Posterior cingulate gyrus (tissue), 11 donors: ENCODE measurements at regions of chr10 and their contacts with region 1.

Region 1: GRCh38 chr10:59625721-59626522 is 83.7 kb downstream of the SLC16A9 start:
- DNase-seq: peak in 6 of 10 donors; percentile 11 to 83 (median 44)

Region 2: DNA sequence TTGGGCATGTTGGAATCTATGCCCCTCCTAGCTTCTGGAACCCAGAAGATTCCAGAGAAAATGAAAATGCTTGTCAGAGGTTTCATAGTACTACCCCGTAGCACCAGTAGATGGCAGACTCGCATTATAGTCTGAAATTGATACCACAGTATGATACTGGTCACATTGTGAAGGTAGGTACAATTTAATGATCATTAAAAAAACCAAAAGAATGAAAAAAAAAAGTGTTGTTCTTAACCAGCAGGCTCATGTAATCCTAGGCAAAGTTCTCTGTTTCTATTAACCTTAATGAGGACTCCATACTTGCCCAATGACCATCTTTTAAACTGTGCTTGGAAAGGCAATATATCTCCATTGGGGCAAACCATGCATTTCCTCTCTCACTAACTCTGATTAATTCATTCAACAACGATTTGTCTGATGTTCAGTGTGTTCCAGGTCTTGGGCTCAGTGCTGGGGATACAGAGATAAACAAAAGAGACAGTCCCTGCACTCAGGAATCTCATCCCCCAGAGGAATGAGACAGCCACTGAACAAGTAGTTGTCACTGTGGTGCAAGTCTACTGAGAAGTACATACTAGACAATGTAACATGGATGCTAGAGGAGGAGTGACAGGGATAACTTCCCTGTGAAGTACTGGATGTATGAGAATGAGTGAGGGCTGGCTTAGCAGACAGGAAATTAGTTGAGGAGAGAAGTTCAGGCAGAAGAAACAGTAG is 673.0 kb before region 1 on chr10:
- intact Hi-C with region 1: loop called (anchors 2 kb)
- DNase-seq: peak in 3 of 10 donors; percentile 45 to 61 (median 46)

Region 3: DNA sequence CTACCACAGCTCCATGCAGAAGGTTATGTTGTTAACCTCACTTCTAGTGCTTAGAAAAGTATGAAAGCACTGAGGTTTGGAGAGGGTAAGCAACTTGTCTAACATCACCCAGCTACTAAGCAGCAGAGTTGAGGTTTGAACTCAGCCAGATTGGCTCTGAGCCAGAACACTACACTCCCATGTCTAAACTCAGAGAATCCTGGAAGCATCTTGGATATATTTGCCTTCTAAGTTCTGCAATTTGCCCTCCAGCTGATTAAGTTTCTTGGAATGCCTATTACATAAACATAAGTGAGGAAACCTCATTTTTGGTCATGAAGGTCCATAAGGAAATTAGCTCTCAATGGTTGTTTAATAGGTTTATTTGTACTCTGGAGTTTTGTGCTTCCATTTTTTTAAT is 527.5 kb before region 1 on chr10:
- intact Hi-C with region 1: no loop called
- DNase-seq: no peak

Region 4: GRCh38 chr10:59580026-59580863 is 45.7 kb before region 1 on chr10:
- intact Hi-C with region 1: loop called (anchors 5 kb)
- DNase-seq: no peak

Region 5: GRCh38 chr10:59830601-59831259 is 204.8 kb after region 1 on chr10:
- intact Hi-C with region 1: loop called (anchors 5 kb)
- DNase-seq: peak in 5 of 10 donors; percentile 19 to 79 (median 47)

Region 6: DNA sequence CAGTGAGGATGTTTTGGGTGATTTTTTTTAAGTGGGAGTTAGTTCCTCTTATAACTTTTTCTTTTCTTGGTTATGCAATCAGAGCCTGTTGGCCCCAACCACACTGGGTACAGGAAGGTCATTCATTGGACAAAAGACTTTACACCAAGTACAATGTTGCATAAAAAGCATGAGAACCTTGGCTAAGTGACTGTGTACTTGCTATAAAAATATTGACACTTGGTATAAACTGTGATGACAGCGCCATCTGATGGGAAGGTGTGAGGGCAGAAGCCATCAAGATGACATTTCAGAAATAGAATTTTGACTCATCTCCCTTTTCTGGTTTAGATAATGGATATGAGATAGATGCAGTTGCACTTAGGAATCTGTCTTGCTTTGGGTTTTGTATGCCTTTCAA is 406.8 kb after region 1 on chr10:
- intact Hi-C with region 1: loop called (anchors 5 kb)
- DNase-seq: peak in 1 of 10 donors; percentile 16